ENCODE measurements at regions of chr12 and their contacts with region 1.

Region 1: DNA sequence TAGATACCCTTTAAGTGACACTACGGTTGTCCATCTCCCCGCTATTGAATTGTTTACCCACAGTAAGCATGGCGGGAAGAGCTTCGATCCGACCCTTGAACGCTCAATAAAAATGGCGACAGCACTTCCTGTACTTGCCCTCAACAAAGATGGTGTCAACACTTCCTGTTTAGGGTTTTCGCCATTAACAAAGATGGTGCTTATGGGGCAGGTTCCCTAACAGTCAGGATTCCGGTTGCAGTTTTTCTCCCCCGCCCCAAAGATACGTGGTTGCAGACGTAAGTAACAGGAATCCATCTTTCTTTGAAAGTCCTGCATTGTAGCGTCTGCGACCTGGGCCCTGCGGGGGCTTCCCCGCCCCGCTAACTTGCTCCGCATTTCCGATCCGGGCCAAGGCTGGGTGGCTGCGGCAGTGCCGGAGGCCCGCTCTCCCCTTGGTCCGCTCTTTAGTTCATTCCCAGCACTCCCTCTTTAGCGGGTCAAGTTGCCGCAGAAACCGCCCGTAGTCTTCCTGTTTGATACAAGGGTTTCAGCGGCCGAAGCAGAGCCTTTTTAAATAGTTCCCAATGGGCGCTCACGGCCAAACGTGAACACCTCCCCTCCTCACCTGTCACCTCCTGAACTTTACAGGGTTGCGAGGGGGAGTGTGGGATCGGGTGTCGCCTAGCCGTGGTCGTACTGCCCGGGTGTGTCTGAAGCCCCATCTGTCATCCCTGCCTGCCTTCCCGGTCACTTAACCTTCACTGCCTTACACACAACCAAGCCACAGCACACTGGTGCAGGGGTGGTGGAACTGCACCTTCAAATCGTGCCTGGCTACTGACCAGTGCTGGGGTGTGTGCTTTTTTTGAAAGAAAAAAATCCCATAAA is at the start of gene CRADD:
- DNase-seq: peak; percentile 80
- H3K4me3 Mint-ChIP-seq: peak within 1 kb of the TSS; percentile 99
- H3K27ac Mint-ChIP-seq: peak within 1 kb of the TSS; percentile 99
- H3K4me1 Mint-ChIP-seq: no peaks in the 10 kb centered on the region
- H3K27me3 Mint-ChIP-seq: no peaks in the 10 kb centered on the region
- CTCF ChIP-seq: no peak
- total RNA-seq, gene CRADD: 9.3 and 10.1 TPM in 2 replicates

Region 2: DNA sequence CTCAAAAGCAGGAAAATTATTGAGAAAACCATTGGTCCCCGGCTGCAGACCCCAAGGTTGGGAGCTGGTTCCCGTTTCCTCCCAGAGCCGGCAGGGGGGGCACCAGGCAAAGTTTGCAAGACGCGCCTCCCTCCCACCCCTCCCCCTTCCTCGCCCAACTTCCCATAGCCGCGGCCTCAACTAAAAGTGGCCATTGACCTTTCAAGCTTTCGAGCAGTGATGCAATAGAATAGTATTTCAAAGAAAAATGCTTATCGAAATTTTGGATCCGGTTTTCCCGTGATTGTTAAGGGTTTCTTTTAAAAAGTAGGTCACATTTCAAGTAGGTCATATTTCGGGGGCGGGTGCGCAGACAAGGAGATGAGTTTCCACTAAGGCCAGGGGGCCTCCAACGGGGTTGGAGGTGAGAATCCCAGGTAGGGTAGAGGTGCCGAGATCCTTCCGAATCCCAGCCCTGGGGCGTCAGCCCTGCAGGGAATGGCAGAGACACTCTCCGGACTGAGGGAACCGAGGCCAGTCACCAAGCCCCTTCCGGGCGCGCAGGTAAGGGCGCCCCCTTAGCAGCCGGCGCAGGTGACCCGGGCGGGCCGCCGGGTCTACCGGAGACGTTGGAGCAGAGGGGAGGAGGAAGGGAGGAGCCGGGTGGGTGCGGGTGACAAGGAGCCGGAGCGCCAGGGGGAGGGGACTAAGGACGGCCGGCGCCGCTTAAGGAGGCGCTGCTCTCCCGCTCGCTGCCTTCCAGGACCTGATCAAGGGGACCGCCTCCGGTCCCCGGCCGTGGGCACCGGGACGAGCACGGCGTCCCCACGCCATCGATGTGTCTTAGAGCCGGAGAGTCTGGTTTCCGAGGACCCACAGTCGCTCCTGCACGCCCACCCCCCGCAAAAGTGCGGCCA is 107.5 kb before region 1 on chr12:
- CTCF ChIA-PET with region 1: interaction called, 5 read pairs
- intact Hi-C with region 1: loop called (anchors 1 kb)
- DNase-seq: peak; percentile 89
- H3K4me3 Mint-ChIP-seq: peak overlapping the region; percentile 90
- H3K27ac Mint-ChIP-seq: peak overlapping the region; percentile 79
- H3K4me1 Mint-ChIP-seq: peaks cover 11% of the 10 kb centered on the region
- H3K27me3 Mint-ChIP-seq: peaks cover 28% of the 10 kb centered on the region
- CTCF ChIP-seq: peak; percentile 83

Region 3: GRCh38 chr12:93587611-93588010 is 89.8 kb before region 1 on chr12:
- CTCF ChIA-PET with region 1: no interaction called
- intact Hi-C with region 1: loop called (anchors 5 kb)
- DNase-seq: no peak
- H3K4me3 Mint-ChIP-seq: no peak overlapping the region
- H3K27ac Mint-ChIP-seq: no peak overlapping the region
- H3K4me1 Mint-ChIP-seq: no peaks in the 10 kb centered on the region
- H3K27me3 Mint-ChIP-seq: peaks cover 14% of the 10 kb centered on the region
- CTCF ChIP-seq: no peak

Region 4: DNA sequence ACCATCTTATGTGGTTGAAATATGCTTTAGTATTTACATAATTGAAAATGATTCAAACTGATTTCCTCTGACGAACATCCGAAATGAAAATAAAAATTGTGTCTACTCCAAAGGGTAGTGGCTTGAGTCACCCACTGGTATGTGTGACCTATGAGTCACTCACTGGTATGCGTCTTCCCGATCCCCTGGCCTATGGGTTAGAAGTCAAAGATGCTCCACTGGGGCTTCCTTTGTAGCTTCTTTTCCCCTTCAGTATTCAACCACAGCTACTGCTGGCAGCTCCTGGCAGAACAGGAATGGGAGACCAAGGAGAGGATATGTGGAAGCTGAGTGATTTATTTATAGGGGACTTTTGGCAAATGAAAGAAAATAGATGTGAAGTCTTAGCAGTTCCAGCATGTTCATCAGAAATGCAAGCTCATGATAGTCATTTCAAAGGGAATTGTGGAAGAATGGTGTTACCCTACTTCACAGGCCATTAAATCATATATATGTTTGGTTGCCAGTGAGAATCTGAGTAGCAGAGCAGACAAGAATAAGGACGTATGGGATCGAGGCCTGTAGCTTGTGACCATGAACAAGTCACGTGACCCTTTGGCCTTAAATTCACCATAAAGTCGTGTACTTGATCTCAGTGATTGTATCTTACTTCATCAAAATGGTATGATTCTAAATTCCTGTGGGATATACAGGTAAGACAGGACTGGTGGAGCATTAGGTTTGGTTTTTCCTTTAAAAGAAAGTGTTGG is 108.0 kb after region 1 on chr12:
- CTCF ChIA-PET with region 1: no interaction called
- intact Hi-C with region 1: loop called (anchors 5 kb)
- DNase-seq: peak; percentile 63
- H3K4me3 Mint-ChIP-seq: peak overlapping the region; percentile 4
- H3K27ac Mint-ChIP-seq: peak overlapping the region; percentile 74
- H3K4me1 Mint-ChIP-seq: peaks cover 34% of the 10 kb centered on the region
- H3K27me3 Mint-ChIP-seq: no peaks in the 10 kb centered on the region
- CTCF ChIP-seq: no peak